Caco-2 (cell line): ENCODE measurements at regions of chr19 and their contacts with region 1.

Region 1: GRCh38 chr19:14136509-14137281 is at the start of gene ASF1B:
- DNase-seq: peak; percentile 98 to 99
- H3K4me3 ChIP-seq: peak within 1 kb of the TSS; percentile 93
- H3K4me3 Mint-ChIP-seq: peak within 1 kb of the TSS; percentile 74
- H3K27ac Mint-ChIP-seq: peak within 1 kb of the TSS; percentile 83
- H3K4me1 ChIP-seq: peaks cover 5% of the 10 kb centered on the region; the same call in 1 of the 2 replicates
- H3K4me1 Mint-ChIP-seq: peaks cover 7% of the 10 kb centered on the region
- H3K27me3 ChIP-seq: no peaks in the 10 kb centered on the region
- H3K27me3 Mint-ChIP-seq: no peaks in the 10 kb centered on the region
- CTCF ChIP-seq: peak; percentile 35 to 75
- total RNA-seq, gene ASF1B: 37.7 and 40.2 TPM in 2 replicates

Region 2: GRCh38 chr19:14006243-14006765 is 130.4 kb before region 1 on chr19 and contains the start of gene RFX1:
- CTCF ChIA-PET with region 1: interaction called, 4 read pairs
- POLR2A ChIA-PET with region 1: interaction called, 12 read pairs
- intact Hi-C with region 1: no loop called
- DNase-seq: peak; percentile 99
- H3K4me3 ChIP-seq: peak within 1 kb of the TSS; percentile 93
- H3K4me3 Mint-ChIP-seq: peak within 1 kb of the TSS; percentile 84
- H3K27ac Mint-ChIP-seq: peak within 1 kb of the TSS; percentile 98
- H3K4me1 ChIP-seq: no peaks in the 10 kb centered on the region
- H3K4me1 Mint-ChIP-seq: no peaks in the 10 kb centered on the region
- H3K27me3 ChIP-seq: no peaks in the 10 kb centered on the region
- H3K27me3 Mint-ChIP-seq: no peaks in the 10 kb centered on the region
- CTCF ChIP-seq: no peak
- total RNA-seq, gene RFX1: 11.5 and 13.4 TPM in 2 replicates

Region 3: DNA sequence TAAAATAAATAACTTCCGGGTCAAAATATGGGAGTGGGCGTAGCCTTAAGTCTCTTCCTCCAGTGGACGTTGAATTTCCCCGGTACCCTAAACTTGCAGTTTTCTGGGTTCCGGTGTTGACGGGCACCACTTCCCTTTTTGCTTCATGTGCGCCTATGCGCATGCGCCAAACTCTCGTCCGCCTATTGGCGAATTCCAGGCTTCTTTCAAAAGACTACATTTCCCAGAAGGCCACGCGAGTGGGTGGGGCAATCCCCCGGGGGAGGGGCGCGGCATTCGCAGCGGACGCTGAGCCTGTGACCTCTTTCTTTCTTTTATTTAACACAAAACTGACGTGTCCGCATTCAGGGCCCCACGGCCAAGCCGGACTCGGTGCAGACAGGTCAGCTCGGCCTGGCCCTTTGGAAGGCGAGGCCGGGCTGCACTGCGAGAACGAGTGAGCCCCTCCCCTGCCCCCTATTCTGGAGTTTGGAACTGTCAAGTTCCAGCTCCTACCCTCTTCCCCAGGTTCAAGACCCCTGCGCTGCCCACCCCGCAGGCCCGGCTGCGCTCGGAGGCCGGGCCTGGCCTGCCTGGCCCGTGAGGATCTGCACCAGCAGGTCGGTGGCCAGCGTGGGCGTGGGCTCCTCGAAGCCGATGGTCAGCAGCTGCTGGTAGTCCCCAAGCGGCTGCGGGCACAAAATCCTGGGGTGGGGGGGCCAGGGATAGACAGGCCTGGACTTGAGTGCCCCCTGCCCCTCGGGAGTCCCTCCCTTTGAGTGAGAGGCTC is 55.2 kb before region 1 on chr19:
- CTCF ChIA-PET with region 1: interaction called, 4 read pairs
- POLR2A ChIA-PET with region 1: interaction called, 4 read pairs
- intact Hi-C with region 1: loop called (anchors 2 kb)
- DNase-seq: peak; percentile 97 to 98
- H3K4me3 ChIP-seq: peak overlapping the region; percentile 83
- H3K4me3 Mint-ChIP-seq: peak overlapping the region; percentile 93
- H3K27ac Mint-ChIP-seq: peak overlapping the region; percentile 95
- H3K4me1 ChIP-seq: peaks cover 10% of the 10 kb centered on the region; the same call in 1 of the 2 replicates
- H3K4me1 Mint-ChIP-seq: no peaks in the 10 kb centered on the region
- H3K27me3 ChIP-seq: no peaks in the 10 kb centered on the region
- H3K27me3 Mint-ChIP-seq: no peaks in the 10 kb centered on the region
- CTCF ChIP-seq: no peak

Region 4: GRCh38 chr19:14122924-14123323 is 13.8 kb before region 1 on chr19:
- CTCF ChIA-PET with region 1: interaction called, 9 read pairs
- POLR2A ChIA-PET with region 1: interaction called, 16 read pairs
- intact Hi-C with region 1: loop called (anchors 2 kb)
- DNase-seq: no peak
- H3K4me3 ChIP-seq: no peak overlapping the region
- H3K4me3 Mint-ChIP-seq: no peak overlapping the region
- H3K27ac Mint-ChIP-seq: peak overlapping the region; percentile 4
- H3K4me1 ChIP-seq: peaks cover 13% of the 10 kb centered on the region
- H3K4me1 Mint-ChIP-seq: peaks cover 8% of the 10 kb centered on the region
- H3K27me3 ChIP-seq: no peaks in the 10 kb centered on the region
- H3K27me3 Mint-ChIP-seq: no peaks in the 10 kb centered on the region
- CTCF ChIP-seq: no peak

Region 5: GRCh38 chr19:14167576-14168138 is 31.0 kb after region 1 on chr19:
- CTCF ChIA-PET with region 1: interaction called, 11 read pairs
- POLR2A ChIA-PET with region 1: interaction called, 3 read pairs
- intact Hi-C with region 1: no loop called
- DNase-seq: no peak
- H3K4me3 ChIP-seq: no peak overlapping the region
- H3K4me3 Mint-ChIP-seq: no peak overlapping the region
- H3K27ac Mint-ChIP-seq: no peak overlapping the region
- H3K4me1 ChIP-seq: no peaks in the 10 kb centered on the region
- H3K4me1 Mint-ChIP-seq: no peaks in the 10 kb centered on the region
- H3K27me3 ChIP-seq: no peaks in the 10 kb centered on the region
- H3K27me3 Mint-ChIP-seq: no peaks in the 10 kb centered on the region
- CTCF ChIP-seq: no peak

Region 6: DNA sequence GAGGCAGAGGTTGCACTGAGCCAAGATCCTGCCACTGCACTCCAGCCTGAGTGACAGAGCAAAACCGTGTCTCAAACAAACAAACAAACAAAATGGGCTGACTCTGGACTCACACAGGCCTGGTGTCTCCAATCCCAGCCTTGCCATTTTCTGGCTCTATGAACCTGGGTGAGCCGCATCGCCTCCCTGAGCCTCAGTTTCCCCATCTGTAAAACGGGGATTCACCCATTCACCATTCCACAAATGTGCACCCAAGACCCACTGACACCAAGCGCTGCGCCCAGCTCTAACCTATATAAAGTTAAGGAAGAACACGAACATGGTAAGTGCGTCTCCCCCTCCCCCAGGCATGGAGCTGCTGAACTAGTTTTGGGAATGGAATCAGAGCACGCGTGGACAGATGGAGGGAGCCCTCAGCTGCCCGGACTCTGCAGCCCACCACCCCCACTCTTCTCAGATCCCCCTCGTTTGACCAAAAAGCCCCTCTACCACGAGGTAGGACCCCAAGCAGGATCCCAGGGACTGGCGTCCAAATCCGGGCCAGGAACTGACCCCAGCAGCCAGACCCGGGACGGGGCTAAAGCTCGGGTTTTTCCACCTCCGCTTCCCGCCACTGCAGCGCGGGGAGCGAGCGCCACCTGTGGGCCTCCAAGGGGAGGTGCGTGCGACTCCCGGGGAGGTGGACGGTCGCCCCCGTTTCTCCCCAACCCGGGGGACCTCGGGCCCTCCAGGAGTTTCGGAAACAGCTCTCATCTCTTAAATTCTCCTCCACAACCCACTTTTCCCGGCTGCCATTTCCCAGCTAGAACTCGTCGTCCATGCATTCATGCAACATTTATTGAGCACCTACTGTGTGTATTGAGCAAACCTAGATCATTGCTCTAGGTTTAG is 211.5 kb after region 1 on chr19:
- CTCF ChIA-PET with region 1: interaction called, 27 read pairs
- POLR2A ChIA-PET with region 1: interaction called, 6 read pairs
- intact Hi-C with region 1: loop called (anchors 5 kb)
- DNase-seq: peak; percentile 62 to 77
- H3K4me3 ChIP-seq: peak overlapping the region; percentile 29; the same call in 1 of the 2 replicates
- H3K4me3 Mint-ChIP-seq: peak overlapping the region; percentile 56
- H3K27ac Mint-ChIP-seq: no peak overlapping the region
- H3K4me1 ChIP-seq: no peaks in the 10 kb centered on the region
- H3K4me1 Mint-ChIP-seq: no peaks in the 10 kb centered on the region
- H3K27me3 ChIP-seq: no peaks in the 10 kb centered on the region
- H3K27me3 Mint-ChIP-seq: no peaks in the 10 kb centered on the region
- CTCF ChIP-seq: peak; percentile 94 to 96

Region 7: DNA sequence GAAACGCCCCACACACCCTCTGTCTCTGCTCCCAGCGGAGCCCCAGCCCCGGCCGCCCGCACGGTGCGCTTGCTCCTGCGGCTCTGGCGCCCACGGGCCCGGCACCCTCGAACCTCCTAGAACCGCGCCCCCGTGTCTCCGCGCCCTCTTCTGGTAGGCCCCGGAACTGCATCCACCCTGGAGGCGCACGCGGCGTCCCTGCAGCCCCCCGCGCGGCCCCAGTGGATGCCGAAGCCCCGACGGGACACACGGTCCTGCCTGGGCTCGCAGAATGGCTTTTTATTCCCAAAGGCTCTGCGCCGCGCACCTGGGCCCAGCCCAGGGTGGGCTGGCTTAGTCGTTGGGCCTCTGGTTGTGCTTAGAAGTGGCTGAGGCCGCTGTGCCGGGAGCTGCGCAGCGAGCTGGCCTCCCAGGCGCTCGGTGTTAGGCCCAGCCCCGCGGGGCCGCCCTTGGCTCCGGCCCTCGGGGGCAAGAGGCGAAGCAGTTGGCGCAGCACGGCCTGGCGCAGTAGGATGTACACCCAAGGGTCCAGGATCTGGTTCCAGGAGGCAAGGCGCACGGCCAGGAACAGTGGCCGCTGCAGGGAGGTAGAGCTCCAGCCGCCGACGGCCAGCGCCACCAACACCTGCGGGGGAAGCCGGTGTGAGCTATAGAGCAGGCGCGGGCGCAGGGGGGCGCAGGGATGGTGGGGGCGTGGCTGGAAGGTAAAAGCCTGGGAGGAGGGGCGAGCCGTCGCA is 335.7 kb after region 1 on chr19:
- CTCF ChIA-PET with region 1: interaction called, 22 read pairs
- POLR2A ChIA-PET with region 1: no interaction called
- intact Hi-C with region 1: loop called (anchors 1 kb)
- DNase-seq: peak; percentile 66 to 81
- H3K4me3 ChIP-seq: peak overlapping the region; percentile 45
- H3K4me3 Mint-ChIP-seq: peak overlapping the region; percentile 50
- H3K27ac Mint-ChIP-seq: peak overlapping the region; percentile 60
- H3K4me1 ChIP-seq: no peaks in the 10 kb centered on the region; the same call in 1 of the 2 replicates
- H3K4me1 Mint-ChIP-seq: peaks cover 15% of the 10 kb centered on the region
- H3K27me3 ChIP-seq: no peaks in the 10 kb centered on the region
- H3K27me3 Mint-ChIP-seq: no peaks in the 10 kb centered on the region
- CTCF ChIP-seq: peak; percentile 81 to 94